ENCODE measurements at regions of chr10 and their contacts with region 1.

Region 1: GRCh38 chr10:101441541-101442455 is 87.8 kb downstream of the BTRC start:
- DNase-seq: peak in 3 of 10 donors; percentile 21 to 35 (median 24)

Region 2: DNA sequence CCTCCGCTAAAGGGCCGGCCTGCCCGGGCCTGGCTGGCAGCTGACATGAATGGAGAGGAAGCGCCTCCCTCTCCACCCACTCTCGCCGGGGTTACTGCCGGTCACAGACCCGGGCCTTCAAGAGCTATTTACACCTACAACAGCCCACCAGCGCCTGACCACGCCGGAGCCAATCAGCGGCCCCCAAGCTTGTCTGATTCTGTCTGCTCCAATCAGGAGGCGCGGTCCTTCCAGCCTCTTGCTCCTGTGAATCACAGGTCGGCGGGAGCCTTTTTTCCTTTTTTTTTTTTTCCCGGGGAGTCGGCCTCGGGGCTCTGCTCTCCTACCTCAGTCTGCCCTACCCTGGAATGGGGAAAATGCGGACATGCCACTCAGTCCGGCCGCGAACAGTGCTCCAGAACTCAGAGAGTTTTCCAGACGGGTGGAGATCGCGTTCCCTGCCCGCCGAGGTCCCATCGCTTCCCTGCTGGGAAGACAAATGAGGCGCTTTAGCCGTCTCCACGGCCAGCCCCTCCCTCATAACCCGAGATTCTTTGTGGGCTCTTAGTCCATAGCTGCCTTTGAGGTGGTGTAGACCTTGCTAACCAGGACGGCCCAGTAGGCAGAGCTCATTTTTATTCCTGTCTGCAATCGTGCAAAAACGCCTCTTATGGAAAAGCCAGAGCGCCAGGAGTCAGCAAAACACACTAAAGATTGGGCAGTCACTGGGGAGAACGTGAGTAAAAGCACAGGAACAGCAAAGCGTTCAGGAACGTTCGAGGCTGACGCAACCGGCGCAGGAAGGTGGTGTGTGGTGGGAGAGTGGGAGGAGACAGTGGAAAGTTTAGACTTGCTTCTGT is 1068.3 kb before region 1 on chr10:
- intact Hi-C with region 1: no loop called
- DNase-seq: peak; percentile 96 to 100 (median 98)

Region 3: DNA sequence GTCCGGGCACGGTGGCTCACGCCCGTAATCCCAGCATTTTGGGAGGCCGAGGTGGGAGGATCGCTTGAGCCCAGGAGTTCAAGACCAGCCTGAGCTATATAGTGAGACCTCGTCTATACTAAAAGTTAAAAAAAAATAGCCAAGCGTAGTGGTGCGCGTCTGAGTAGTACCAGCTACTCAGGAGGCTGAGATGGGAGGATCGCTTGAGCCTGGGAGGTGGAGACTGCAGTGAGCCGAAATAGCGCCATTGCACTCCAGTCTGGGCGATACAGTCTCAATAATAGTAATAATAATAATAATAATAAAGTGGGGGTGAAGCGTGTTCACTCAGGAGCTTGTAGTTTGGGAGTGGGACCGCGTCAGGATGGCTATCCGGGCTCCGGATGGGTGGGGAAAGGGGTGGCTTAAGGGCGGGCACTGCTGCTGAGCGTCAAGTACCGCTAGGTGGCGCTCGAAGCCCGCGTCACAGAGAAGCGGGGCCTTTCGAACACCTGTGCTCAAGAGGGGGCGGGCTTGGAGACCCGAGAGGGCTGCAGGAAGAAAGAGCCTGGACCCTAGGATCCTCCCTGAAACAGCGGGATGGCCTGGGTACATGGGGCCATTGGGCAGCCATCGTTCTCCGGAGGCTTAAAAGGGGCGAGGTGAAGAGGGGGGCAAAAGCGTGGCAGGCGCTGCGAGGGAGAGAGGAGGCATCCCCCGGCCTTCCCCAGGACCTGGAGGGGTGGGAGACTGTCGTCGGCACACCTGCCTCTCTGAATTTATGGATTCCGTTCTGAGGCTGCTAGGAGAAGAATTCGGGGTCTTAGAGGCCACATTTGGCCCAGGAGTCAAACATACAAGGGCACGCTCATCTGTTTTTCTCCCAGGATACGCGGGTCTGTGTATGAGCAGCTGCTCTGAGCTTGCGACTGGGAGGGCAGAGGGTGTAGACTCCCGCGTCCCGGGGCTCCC is 227.1 kb before region 1 on chr10:
- intact Hi-C with region 1: loop called (anchors 5 kb)
- DNase-seq: peak in 7 of 10 donors; percentile 56 to 93 (median 62)

Region 4: GRCh38 chr10:101272229-101272868 is 169.4 kb before region 1 on chr10:
- intact Hi-C with region 1: loop called (anchors 1 kb)
- DNase-seq: peak; percentile 36 to 95 (median 70)

Region 5: DNA sequence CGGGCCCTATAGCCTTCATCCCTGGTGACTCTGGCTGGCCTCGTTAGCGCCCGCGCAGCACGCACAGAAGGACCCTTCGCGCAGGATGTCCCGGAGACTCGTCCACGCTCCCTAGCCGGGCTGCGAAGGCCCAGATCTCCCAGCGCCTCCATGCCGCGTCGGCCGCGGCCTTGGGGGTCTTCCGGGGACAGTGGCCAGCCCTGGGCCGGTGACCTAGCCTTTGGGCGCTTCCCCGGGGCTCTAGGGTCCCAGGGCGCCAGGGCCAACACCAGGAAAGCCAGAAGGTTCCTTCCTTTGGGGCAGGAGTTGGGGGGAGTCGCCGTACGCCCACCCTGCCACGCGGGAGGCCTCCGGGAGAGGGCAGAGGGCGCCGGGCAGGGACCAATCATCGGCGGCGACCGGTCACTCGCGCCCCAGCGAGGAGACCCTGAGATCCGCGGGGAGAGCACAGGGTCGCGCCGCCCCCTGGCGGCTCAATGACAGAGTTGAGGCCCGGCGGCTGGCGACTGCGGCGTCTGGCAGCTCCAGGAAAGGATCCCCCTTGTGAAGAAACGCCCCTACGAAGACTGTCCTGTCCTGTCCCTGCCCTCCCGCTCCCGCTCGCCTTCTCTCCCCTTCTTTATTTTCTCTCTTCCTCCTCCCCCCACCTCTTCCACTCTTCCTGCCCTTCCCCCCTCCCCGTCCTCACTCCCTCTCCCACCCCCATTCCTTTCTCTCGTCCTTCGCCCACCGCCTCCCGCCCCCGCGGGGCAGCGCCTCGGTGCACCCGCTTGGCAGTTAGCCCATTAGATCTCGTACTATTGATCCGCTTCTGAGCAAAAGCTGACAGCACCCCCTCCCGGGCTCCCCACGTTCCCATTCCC is 150.2 kb before region 1 on chr10:
- intact Hi-C with region 1: loop called (anchors 5 kb)
- DNase-seq: peak; percentile 44 to 93 (median 70)

Region 6: GRCh38 chr10:101569838-101570766 is 128.3 kb after region 1 on chr10:
- intact Hi-C with region 1: loop called (anchors 1 kb)
- DNase-seq: peak; percentile 62 to 97 (median 80)

Region 7: DNA sequence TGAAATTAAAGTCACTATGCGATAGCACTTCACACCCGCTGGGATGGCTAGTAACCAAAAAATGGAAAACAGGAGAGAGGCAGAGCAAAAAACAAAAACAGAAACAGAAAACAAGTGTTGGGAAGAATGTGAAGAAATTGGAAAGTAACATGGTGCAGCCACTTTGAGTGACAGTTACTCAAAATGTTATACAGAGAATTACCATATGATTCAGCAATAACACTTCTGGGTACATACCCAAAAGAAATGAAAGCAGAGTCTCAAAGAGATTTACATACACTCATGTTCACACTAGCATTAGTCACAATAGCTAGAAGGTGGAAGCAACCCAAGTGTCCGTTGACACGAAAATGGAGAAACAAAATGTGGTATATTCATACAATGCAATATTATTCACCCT is 490.4 kb after region 1 on chr10:
- intact Hi-C with region 1: no loop called
- DNase-seq: no peak

Region 8: GRCh38 chr10:102038410-102038809 is 596.6 kb after region 1 on chr10:
- intact Hi-C with region 1: no loop called
- DNase-seq: no peak